OCI-LY7 (cell line): ENCODE measurements at regions of chr1 and their contacts with region 1.

Region 1: GRCh38 chr1:193083365-193084088 is 21.7 kb downstream of the GLRX2 start:
- DNase-seq: no peak
- H3K4me3 ChIP-seq: no peak overlapping the region
- H3K27ac ChIP-seq: no peak overlapping the region
- H3K4me1 ChIP-seq: no peaks in the 10 kb centered on the region
- CTCF ChIP-seq: no peak

Region 2: GRCh38 chr1:193031438-193031837 is 52.1 kb before region 1 on chr1:
- CTCF ChIA-PET with region 1: no interaction called
- POLR2A ChIA-PET with region 1: no interaction called
- intact Hi-C with region 1: no loop called
- DNase-seq: peak; percentile 14
- H3K4me3 ChIP-seq: no peak overlapping the region
- H3K27ac ChIP-seq: no peak overlapping the region
- H3K4me1 ChIP-seq: peaks cover 8% of the 10 kb centered on the region
- CTCF ChIP-seq: peak; percentile 80

Region 3: GRCh38 chr1:193069748-193070385 is 13.7 kb before region 1 on chr1:
- CTCF ChIA-PET with region 1: no interaction called
- POLR2A ChIA-PET with region 1: interaction called, 6 read pairs
- intact Hi-C with region 1: loop called (anchors 2 kb)
- DNase-seq: peak; percentile 38
- H3K4me3 ChIP-seq: peak overlapping the region; percentile 18
- H3K27ac ChIP-seq: peak overlapping the region; percentile 38
- H3K4me1 ChIP-seq: peaks cover 27% of the 10 kb centered on the region
- CTCF ChIP-seq: peak; percentile 79

Region 4: GRCh38 chr1:193104906-193105820 is 21.6 kb after region 1 on chr1 and contains the start of gene GLRX2:
- CTCF ChIA-PET with region 1: no interaction called
- POLR2A ChIA-PET with region 1: interaction called, 18 read pairs
- intact Hi-C with region 1: no loop called
- DNase-seq: peak; percentile 75
- H3K4me3 ChIP-seq: peak within 1 kb of the TSS; percentile 84
- H3K27ac ChIP-seq: peak within 1 kb of the TSS; percentile 23
- H3K4me1 ChIP-seq: peaks cover 15% of the 10 kb centered on the region
- CTCF ChIP-seq: peak; percentile 42
- total RNA-seq, gene GLRX2: 10.6 and 11.0 TPM in 2 replicates

Region 5: GRCh38 chr1:193111641-193112090 is 28.1 kb after region 1 on chr1:
- CTCF ChIA-PET with region 1: no interaction called
- POLR2A ChIA-PET with region 1: interaction called, 14 read pairs
- intact Hi-C with region 1: no loop called
- DNase-seq: no peak
- H3K4me3 ChIP-seq: no peak overlapping the region
- H3K27ac ChIP-seq: no peak overlapping the region
- H3K4me1 ChIP-seq: no peaks in the 10 kb centered on the region
- CTCF ChIP-seq: no peak